PC-9 (cell line): ENCODE measurements at regions of chr19 and their contacts with region 1.

Region 1: GRCh38 chr19:43316592-43317319 is 36.7 kb upstream of the CD177 start:
- DNase-seq: no peak
- H3K4me3 ChIP-seq: no peak overlapping the region
- H3K27ac ChIP-seq: no peak overlapping the region
- H3K4me1 ChIP-seq: peaks cover 24% of the 10 kb centered on the region
- H3K27me3 ChIP-seq: no peaks in the 10 kb centered on the region
- CTCF ChIP-seq: no peak

Region 2: DNA sequence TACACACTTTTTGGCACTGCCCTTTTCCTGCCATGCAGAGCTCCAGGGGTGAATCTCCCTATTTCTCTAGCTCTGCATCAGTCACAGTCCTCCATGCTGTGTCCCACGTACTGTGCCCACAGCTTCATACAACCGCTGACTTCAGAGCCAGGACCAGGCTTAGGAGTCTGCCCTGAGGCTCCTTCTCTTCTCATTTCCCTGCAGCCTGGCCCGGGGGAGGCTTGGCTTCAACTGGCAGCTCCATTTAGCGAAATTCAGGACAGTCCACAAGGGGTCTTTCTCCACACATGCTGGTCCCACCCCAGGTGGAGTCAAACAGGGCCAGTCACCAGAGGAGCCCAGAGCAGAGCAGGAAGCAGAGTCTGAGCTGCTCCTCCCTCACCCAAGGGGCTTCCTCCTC is 245.9 kb before region 1 on chr19:
- CTCF ChIA-PET with region 1: no interaction called
- POLR2A ChIA-PET with region 1: no interaction called
- intact Hi-C with region 1: no loop called
- DNase-seq: no peak
- H3K4me3 ChIP-seq: no peak overlapping the region
- H3K27ac ChIP-seq: no peak overlapping the region
- H3K4me1 ChIP-seq: no peaks in the 10 kb centered on the region
- H3K27me3 ChIP-seq: no peaks in the 10 kb centered on the region
- CTCF ChIP-seq: no peak

Region 3: DNA sequence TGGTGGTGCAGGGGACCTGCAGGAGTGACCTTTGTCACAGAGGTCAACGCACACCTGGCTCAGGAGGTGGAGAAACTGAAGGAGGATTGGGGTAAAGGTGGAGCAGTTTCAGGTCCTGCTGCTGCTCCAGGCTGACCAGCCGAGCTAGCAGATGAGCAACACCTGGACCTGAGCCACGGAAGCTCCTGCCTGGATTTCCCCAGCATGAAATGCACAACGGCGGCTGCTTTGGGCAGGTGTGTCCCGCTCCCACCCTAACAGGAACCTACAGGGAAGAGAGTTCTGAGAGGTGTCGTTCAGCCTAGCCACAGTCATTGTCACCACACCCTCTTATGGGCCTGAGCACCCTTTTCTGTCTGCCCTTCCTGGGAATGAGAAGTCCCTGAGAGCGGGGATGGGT is 21.0 kb after region 1 on chr19:
- CTCF ChIA-PET with region 1: no interaction called
- POLR2A ChIA-PET with region 1: no interaction called
- intact Hi-C with region 1: no loop called
- DNase-seq: no peak
- H3K4me3 ChIP-seq: no peak overlapping the region
- H3K27ac ChIP-seq: no peak overlapping the region
- H3K4me1 ChIP-seq: peaks cover 34% of the 10 kb centered on the region
- H3K27me3 ChIP-seq: no peaks in the 10 kb centered on the region
- CTCF ChIP-seq: no peak

Region 4: DNA sequence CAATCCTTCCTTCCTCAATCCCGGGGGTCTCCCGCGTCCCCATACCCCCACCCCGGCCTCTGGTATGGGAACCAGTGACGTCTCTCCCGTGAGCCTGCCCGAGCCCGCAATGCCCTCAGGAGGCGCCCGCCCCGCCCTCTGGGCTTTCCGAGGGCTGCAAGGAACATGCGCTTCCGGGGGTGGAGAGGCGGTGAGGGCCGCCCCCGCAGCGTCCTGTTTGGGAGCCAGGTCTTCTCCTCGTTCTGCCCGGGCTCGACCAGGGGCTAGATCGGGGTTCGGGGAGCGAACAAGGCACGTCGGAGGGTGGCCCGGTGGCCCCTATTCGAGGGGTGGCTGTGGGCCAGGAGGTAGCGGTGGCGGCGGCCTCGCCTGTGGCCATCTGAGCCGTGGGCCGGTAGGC is 91.3 kb after region 1 on chr19:
- CTCF ChIA-PET with region 1: no interaction called
- POLR2A ChIA-PET with region 1: interaction called, 14 read pairs
- intact Hi-C with region 1: no loop called
- DNase-seq: no peak
- H3K4me3 ChIP-seq: no peak overlapping the region
- H3K27ac ChIP-seq: no peak overlapping the region
- H3K4me1 ChIP-seq: peaks cover 12% of the 10 kb centered on the region; the same call in 1 of the 2 replicates
- H3K27me3 ChIP-seq: no peaks in the 10 kb centered on the region
- CTCF ChIP-seq: no peak